HEK293 (cell line): ENCODE measurements at regions of chr14 and their contacts with region 1.

Region 1: GRCh38 chr14:58297762-58298476 is 436 bp upstream of the ARID4A start:
- H3K4me3 ChIP-seq: peak overlapping the region; percentile 100
- H3K27ac ChIP-seq: peak overlapping the region; percentile 87
- H3K4me1 ChIP-seq: 0 out of 2 replicates have a peak, but pooled peaks cover 4% of the 10 kb centered on the region
- CTCF ChIP-seq: peak; percentile 36; the same call in 1 of the 2 replicates

Region 2: GRCh38 chr14:58244556-58245387 is 53.1 kb before region 1 on chr14 and contains the start of gene PSMA3:
- CTCF ChIA-PET with region 1: interaction called, 6 read pairs
- POLR2A ChIA-PET with region 1: interaction called, 36 read pairs
- H3K4me3 ChIP-seq: peak within 1 kb of the TSS; percentile 96
- H3K27ac ChIP-seq: peak within 1 kb of the TSS; percentile 88
- H3K4me1 ChIP-seq: peaks cover 14% of the 10 kb centered on the region; the same call in 1 of the 2 replicates
- CTCF ChIP-seq: no peak

Region 3: DNA sequence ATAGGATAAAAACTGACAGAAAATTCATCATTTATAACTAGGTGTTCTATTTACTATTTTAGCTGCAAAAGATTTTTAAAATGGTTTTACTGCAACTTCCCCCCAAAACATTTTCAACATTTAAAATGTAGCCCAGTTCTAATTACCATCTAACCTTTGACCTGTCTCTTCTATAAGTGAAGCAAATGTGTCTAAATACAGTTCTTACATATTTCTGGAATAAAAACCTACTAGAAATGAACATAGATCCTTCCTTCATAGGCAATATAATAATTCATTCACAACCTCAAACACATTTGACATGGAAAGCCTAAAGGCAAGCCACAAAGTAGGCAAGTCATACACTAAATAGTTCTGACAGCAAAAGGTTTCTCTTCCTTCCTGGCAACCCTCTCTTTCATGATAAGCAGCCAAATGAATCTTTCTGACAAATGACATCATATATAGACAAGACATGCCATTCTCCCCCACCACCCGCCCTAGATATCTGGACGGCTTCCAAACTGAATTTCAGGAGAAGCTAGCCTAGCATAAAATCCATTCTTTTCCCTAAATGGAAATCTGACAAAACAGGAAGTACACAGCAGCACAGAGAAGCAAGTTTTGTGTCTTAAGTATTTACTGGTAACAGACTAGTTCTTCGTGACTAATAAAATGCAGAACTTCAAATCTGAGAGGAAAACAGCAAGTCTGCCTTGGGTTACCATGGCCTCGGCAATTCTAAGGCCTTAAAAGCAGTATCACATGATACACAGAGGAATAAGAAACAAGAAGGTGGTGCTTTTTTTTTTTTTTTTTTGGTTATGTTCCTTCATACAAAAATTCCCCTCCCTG is 16.7 kb before region 1 on chr14:
- CTCF ChIA-PET with region 1: no interaction called
- POLR2A ChIA-PET with region 1: interaction called, 14 read pairs
- H3K4me3 ChIP-seq: no peak overlapping the region
- H3K27ac ChIP-seq: peak overlapping the region; percentile 54
- H3K4me1 ChIP-seq: peaks cover 10% of the 10 kb centered on the region
- CTCF ChIP-seq: no peak

Region 4: GRCh38 chr14:58427281-58428117 is 129.6 kb after region 1 on chr14 and contains the starts of genes KIAA0586 and TIMM9:
- CTCF ChIA-PET with region 1: no interaction called
- POLR2A ChIA-PET with region 1: interaction called, 16 read pairs
- H3K4me3 ChIP-seq: peak within 1 kb of the TSS; percentile 65
- H3K27ac ChIP-seq: peak within 1 kb of the TSS; percentile 81
- H3K4me1 ChIP-seq: no peaks in the 10 kb centered on the region
- CTCF ChIP-seq: no peak